ENCODE measurements at regions of chr19 and their contacts with region 1.

Region 1: DNA sequence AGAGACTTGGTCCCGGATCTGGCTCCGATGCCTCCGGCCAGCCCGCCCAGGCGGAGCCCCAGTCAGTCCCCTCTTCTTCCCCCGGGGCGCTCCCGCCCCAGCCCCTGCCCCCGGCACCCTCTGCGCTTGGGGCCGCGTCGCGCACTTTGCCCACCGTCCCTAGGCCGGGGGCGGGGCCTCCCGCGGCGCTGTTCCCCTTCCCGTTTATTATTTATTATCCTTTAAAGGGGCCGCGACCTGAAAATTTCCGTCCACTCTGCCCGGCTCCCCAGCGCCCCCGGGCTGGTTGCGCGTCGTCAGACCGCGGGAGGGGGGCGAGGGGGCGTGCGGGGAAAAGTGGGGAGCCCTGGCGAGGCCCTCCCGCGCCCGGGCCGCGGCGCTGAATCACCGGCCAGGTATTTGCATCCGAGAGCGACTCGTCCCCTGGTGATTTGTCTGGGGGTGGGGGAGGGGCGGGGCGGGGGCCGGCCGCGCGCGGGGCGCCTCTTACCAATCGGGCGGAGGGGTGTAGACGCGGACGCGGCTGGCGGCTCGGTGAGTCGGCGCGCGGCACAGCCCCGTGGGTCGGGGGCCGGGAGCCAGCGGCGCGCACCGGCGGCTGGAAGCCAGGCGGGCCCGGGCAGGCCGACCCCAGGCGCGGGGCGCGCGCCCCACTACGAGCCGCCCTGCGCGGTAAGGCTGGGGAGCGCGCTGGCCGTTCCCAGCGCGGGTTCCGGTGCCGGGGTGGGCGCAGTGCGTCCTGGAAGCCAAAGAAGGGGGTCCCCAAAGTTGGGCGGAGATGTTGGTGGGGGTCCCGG is at the start of gene ARID3A:
- DNase-seq: peak; percentile 88 to 92
- ATAC-seq: peak; percentile 86
- H3K4me3 ChIP-seq: peak within 1 kb of the TSS; percentile 77 to 90
- H3K27ac ChIP-seq: no peak within 1 kb of the TSS
- H3K4me1 ChIP-seq: no peaks in the 10 kb centered on the region
- H3K27me3 ChIP-seq: no peaks in the 10 kb centered on the region
- total RNA-seq, gene ARID3A: 9.3 to 13.8 TPM

Region 2: DNA sequence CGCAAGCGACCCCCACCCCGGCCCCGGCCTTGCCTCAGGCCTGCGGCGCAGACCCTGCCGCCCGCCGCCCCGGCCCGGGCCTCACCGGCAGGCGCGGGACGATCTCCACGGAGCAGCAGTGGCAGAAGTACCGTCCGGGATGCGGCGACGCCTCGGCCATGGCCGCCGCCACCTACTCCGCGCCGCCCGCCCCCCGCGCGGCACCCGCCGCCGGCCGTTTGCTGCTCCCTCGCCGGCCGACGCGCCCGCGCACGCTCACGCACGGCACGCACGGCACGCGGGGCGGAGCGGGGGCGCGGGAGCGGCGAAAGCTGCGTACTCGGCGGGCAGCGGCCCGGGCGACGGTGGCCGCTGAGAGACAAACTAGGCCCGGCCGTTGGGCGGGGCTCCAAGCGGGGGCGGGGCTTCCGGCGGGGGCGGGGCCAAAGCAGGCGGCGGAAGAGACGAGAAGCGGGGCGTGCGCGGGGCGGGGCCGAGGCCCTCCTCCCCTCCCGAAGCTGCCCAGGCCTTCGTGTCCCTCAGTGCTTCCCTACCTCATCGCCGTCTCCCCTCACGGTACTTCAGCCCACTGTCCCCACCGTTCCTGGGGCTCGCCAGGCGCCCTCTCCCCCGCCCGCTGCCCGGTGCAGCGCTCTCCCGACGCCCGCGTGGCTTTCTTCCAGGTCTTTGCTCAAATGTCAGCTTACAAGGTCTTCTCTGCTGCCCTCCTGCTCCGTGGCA is 262.6 kb before region 1 on chr19 and contains the start of gene RNF126:
- intact Hi-C with region 1: loop called (anchors 5 to 10 kb)
- DNase-seq: peak; percentile 94 to 98
- ATAC-seq: peak; percentile 90
- H3K4me3 ChIP-seq: peak within 1 kb of the TSS; percentile 36 to 94
- H3K27ac ChIP-seq: peak within 1 kb of the TSS in 1 of 2 donors; percentile 65
- H3K4me1 ChIP-seq: no peaks in the 10 kb centered on the region
- H3K27me3 ChIP-seq: no peaks in the 10 kb centered on the region
- total RNA-seq, gene RNF126: 26.7 to 26.9 TPM

Region 3: GRCh38 chr19:771332-771785 is 154.4 kb before region 1 on chr19:
- intact Hi-C with region 1: loop called (anchors 2 to 5 kb)
- DNase-seq: no peak
- ATAC-seq: no peak
- H3K4me3 ChIP-seq: no peak overlapping the region
- H3K27ac ChIP-seq: no peak overlapping the region
- H3K4me1 ChIP-seq: no peaks in the 10 kb centered on the region
- H3K27me3 ChIP-seq: no peaks in the 10 kb centered on the region

Region 4: DNA sequence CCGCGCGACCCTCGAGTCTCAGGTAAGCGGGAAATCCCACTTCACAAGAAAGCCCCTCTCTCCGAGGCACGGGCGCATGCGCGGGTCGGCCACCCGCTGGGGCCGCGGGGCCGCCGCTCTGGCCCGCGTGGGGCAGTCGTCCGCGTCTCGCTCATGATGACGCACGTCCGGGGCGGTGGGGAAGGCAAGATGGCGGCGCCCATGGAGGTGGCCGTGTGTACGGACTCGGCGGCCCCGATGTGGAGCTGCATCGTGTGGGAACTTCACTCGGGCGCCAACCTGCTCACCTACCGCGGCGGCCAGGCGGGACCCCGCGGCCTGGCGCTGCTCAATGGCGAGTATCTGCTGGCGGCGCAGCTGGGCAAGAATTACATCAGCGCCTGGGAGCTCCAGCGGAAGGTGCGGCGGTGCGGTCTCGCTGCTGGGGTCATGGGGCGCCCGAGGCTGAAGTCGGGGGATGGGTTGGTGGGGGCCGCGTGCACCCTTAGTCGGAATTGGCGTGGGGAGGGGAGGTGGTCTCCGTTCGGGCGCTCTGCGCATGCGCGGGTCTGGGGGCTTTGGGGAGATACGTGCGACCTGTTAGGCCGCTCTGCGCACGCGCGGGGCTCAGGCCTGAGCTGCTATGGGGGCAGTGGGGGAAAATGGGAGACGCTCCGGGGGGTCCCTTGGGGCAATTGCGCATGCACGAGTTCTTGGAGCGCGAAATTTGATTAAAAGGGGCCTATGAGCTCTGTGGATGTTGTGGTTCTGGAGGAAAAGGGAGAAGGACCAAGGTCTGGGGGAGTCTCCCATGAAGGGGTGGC is 58.6 kb after region 1 on chr19 and contains the start of gene WDR18:
- intact Hi-C with region 1: loop called (anchors 1 kb)
- DNase-seq: peak; percentile 96 to 99
- ATAC-seq: peak; percentile 95
- H3K4me3 ChIP-seq: peak within 1 kb of the TSS; percentile 44 to 80
- H3K27ac ChIP-seq: peak within 1 kb of the TSS in 1 of 2 donors; percentile 79
- H3K4me1 ChIP-seq: no peaks in the 10 kb centered on the region
- H3K27me3 ChIP-seq: no peaks in the 10 kb centered on the region
- total RNA-seq, gene WDR18: 15.5 to 16.1 TPM

Region 5: DNA sequence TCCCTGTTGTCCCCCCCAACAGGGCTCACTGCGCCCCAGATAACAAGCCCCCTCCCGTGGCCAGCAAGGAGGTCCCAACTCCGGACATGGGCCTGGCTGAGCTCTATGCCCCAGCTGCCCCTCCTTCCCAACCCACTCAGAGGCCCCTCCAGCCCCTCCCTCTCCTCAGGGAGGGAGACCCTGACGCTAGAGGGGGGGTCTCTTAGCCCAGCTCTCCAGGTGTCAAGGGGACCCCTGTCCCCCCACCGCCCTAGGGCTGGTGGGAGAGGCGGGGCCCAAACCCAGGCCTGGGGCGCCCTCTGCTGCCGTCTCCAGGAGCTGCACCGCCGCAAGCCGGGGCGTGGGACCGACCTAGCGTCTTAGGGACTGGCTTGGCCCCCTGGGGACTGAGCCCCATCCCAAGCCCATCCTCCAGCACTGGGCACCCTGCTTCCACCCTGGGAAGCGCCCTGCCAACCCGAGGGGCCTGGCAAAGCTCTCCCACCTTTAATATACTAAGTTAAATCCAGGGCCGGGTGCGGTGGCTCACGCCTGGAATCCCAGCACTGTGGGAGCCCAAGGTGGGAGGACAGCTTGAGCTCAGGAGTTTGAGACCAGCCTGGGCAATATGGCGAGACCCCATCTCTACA is 75.9 kb after region 1 on chr19:
- intact Hi-C with region 1: loop called in 1 of 2 experiments (anchors 1 kb)
- DNase-seq: peak in 1 of 2 donors; percentile 92
- ATAC-seq: peak; percentile 83
- H3K4me3 ChIP-seq: no peak overlapping the region
- H3K27ac ChIP-seq: no peak overlapping the region
- H3K4me1 ChIP-seq: no peaks in the 10 kb centered on the region
- H3K27me3 ChIP-seq: no peaks in the 10 kb centered on the region

Region 6: DNA sequence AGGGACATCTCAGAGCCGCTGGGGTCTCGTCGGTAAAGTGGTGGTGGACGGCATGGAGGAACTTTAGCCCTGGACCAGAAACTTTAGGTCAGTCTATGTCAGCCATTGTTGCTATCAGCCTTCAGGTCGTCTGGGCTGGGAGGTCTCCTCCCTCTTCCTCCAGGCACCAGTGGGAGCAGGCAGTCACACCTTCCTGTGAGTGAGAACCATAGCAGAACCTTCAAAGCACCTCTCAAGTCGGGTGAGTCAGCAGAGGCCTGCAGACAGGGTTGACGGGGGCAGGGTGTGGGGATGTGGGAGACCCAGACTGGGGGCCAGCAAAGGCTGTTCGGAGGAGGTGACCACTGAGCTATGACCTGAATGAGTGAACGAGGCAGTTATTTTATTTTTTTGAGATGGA is 263.7 kb after region 1 on chr19:
- intact Hi-C with region 1: loop called in 1 of 2 experiments (anchors 5 kb)
- DNase-seq: no peak
- ATAC-seq: no peak
- H3K4me3 ChIP-seq: no peak overlapping the region
- H3K27ac ChIP-seq: no peak overlapping the region
- H3K4me1 ChIP-seq: no peaks in the 10 kb centered on the region
- H3K27me3 ChIP-seq: no peaks in the 10 kb centered on the region